ENCODE measurements at regions of chr14 and their contacts with region 1.

Region 1: DNA sequence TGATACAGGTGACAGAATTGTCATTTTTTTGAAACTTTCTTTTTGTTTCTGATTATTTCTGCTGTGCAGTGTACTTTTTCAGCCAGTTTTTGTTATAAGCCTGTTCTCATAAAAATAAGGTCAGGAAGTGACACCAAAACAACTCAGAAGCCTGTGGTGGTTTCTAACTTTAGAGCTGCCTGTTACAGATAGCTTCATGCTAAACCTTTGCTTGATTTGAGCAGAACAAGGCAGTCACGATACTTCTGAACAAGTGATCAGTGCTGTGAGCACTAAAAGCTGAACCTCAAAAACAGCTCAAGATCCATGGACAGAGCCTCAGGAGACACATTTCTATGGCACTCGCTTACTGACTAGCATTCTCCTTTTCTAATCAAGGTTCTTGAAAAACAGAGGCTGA is 82.0 kb downstream of the PRKCH start:
- DNase-seq: peak; percentile 85
- H3K4me3 Mint-ChIP-seq: peak overlapping the region; percentile 71
- H3K27ac Mint-ChIP-seq: peak overlapping the region; percentile 90
- H3K4me1 Mint-ChIP-seq: peaks cover 65% of the 10 kb centered on the region
- H3K27me3 Mint-ChIP-seq: no peaks in the 10 kb centered on the region

Region 2: DNA sequence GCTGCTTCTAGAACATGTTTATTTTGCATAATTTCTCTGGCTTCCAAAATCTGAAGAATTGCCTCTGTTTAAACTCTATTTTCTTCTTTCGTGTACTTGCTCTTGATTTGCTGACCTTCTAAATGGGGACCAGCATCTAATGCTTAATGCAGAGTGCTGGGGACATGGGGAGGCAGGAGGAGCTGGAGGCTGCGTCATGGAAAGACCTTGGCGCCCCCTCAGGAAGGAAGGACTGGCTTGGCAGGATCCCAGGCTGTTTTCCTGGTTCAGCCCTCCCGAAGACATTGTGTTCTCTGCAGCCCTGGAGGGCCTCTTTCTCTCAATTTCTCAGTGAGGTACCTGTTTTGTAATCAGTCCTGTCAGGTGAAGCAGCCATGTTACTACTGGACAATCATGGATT is 76.6 kb before region 1 on chr14:
- intact Hi-C with region 1: loop called (anchors 1 kb)
- DNase-seq: peak; percentile 69
- H3K4me3 Mint-ChIP-seq: peak overlapping the region; percentile 87
- H3K27ac Mint-ChIP-seq: peak overlapping the region; percentile 90
- H3K4me1 Mint-ChIP-seq: peaks cover 59% of the 10 kb centered on the region
- H3K27me3 Mint-ChIP-seq: no peaks in the 10 kb centered on the region

Region 3: DNA sequence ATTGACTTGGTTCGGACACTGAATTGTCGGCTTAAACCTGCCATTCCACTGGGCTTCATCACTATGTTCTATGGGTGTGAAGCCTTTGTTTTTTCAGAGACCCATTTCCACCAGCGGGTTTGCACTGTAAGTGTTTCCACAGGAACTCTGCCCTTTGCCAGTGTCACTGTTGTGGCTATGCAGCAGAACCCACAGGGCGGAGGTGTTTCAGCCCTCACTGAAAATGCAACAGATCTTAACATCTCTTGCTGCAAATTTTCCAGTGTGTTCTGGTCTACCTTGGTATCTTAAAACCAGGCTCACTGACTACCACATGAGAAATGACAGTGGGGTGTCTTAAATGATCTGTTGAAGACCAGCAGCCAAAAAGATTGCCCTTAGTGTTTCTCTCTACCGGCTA is 60.9 kb before region 1 on chr14:
- intact Hi-C with region 1: loop called (anchors 2 kb)
- DNase-seq: peak; percentile 96
- H3K4me3 Mint-ChIP-seq: peak overlapping the region; percentile 86
- H3K27ac Mint-ChIP-seq: peak overlapping the region; percentile 95
- H3K4me1 Mint-ChIP-seq: peaks cover 80% of the 10 kb centered on the region
- H3K27me3 Mint-ChIP-seq: no peaks in the 10 kb centered on the region

Region 4: DNA sequence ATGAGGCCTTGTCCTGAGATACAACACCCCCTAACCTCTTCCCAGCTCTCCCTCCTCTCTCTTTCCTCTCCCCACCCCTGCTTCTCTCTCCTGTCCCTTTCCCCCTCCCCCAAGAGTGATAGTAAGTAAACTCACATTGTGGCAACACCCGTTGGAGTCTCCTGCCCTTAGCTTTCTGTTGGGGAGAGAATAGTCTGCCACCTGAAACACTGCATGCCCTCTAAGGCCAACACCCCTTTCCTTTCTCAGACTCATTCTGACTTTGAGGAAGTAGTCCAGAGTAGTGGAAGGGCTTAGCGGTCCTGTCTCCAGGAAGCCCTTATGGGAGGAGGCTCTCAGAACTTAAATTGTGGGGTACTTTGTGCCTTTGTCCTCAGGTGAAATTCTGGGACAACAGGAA is 13.2 kb after region 1 on chr14:
- intact Hi-C with region 1: loop called (anchors 2 kb)
- DNase-seq: peak; percentile 70
- H3K4me3 Mint-ChIP-seq: peak overlapping the region; percentile 52
- H3K27ac Mint-ChIP-seq: peak overlapping the region; percentile 75
- H3K4me1 Mint-ChIP-seq: peaks cover 58% of the 10 kb centered on the region
- H3K27me3 Mint-ChIP-seq: no peaks in the 10 kb centered on the region

Region 5: GRCh38 chr14:61438860-61439684 is 35.7 kb after region 1 on chr14:
- intact Hi-C with region 1: loop called (anchors 1 kb)
- DNase-seq: peak; percentile 85
- H3K4me3 Mint-ChIP-seq: peak overlapping the region; percentile 87
- H3K27ac Mint-ChIP-seq: peak overlapping the region; percentile 96
- H3K4me1 Mint-ChIP-seq: peaks cover 78% of the 10 kb centered on the region
- H3K27me3 Mint-ChIP-seq: no peaks in the 10 kb centered on the region